Breast epithelium (tissue), 4 donors: ENCODE measurements at regions of chr21 and their contacts with region 1.

Region 1: DNA sequence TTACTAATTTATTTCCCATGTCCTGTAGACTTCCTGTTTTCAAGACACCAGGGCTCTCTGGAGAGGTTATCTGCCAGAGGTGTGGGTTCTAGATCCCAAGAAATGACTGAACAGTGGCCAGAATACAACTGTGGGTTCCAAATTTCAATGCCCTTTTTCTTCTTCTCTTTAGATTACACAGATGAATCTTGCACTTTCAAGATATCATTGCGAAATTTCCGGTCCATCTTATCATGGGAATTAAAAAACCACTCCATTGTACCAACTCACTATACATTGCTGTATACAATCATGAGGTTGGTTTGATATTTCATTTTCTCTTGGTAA is 15.0 kb downstream of the IFNAR2 start:
- DNase-seq: no peak
- H3K4me3 ChIP-seq: no peak overlapping the region
- H3K27ac ChIP-seq: no peak overlapping the region
- H3K4me1 ChIP-seq: no peaks in the 10 kb centered on the region
- H3K27me3 ChIP-seq: no peaks in the 10 kb centered on the region
- CTCF ChIP-seq: no peak
- POLR2A ChIP-seq: no peak

Region 2: DNA sequence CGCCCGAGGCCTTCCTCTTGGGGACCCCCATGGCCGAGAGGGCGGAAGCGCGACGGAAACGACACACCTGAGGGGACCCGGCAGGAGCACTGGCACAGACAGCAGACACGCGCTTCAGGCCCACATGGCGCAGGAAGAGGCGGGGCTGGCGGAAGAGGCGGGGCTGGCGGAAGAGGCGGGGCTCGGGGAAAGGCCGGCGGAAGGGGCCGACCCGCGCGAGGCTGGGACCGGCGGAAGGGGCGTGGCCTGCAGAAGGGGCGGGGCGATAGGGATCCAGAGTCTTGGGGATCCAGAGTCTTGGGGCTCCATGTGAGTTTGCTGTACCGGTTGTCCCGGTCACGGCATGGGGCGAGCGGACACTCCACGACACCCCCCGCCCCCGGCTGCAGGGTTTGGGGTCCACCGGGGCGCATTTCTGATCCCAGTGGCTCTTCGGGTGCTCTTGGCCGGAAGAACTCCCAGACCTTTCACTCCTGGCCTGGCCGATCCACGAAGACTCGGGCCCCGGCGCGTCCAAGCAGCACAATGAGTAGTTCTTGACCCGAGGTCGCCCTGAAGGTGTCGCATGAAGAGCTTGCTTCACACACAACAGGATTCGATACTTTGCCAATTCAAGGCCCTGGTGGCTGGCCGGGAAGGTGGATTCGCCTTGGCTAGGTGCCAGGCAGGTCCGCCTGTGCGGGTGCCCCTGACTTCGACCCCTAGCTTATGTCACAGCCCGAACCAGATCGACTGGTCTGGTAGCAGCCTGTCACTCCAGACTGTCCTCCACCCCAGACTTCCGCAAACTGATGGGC is 851.7 kb before region 1 on chr21 and contains the start of gene URB1:
- intact Hi-C with region 1: loop called (anchors 5 kb)
- DNase-seq: peak; percentile 86 to 93
- H3K4me3 ChIP-seq: peak within 1 kb of the TSS; percentile 68 to 95 (median 86)
- H3K27ac ChIP-seq: peak within 1 kb of the TSS; percentile 91 to 92
- H3K4me1 ChIP-seq: peaks cover 0 to 10% of the 10 kb centered on the region in 2 donors
- H3K27me3 ChIP-seq: no peaks in the 10 kb centered on the region
- CTCF ChIP-seq: peak in 1 of 3 donors; percentile 22
- POLR2A ChIP-seq: peak; percentile 66
- total RNA-seq, gene URB1: 12.8 to 22.2 (median 20.6) TPM